PC-9 (cell line): ENCODE measurements at regions of chr7 and their contacts with region 1.

Region 1: GRCh38 chr7:120272261-120272660 is 714 bp upstream of the KCND2 start:
- DNase-seq: peak; percentile 39 to 44
- H3K4me3 ChIP-seq: peak overlapping the region; percentile 61
- H3K27ac ChIP-seq: no peak overlapping the region
- H3K4me1 ChIP-seq: no peaks in the 10 kb centered on the region
- H3K27me3 ChIP-seq: 0 out of 2 replicates have a peak, but pooled peaks cover 4% of the 10 kb centered on the region
- CTCF ChIP-seq: peak; percentile 83

Region 2: DNA sequence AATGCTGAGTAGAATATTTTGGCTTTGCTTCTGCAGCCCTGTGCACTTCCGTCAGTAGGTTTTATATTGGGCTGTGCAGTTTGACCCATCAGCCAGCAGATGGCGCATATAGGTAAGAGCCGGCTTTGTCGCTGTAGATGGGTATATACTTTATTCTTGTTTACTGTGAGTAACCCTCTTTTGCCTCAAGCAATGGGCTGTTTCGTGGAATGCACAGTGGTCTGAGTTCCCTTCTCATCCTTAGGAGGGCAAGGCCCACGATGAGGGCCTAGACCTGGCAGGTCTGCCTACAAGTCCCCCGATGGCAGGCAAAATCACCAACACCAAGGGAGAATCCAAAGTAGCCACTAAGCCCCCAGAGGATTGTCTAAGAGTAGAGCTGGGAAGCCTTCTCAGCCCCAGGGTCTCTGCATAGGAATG is 1002.2 kb before region 1 on chr7:
- CTCF ChIA-PET with region 1: no interaction called
- POLR2A ChIA-PET with region 1: no interaction called
- intact Hi-C with region 1: loop called (anchors 1 kb)
- DNase-seq: peak; percentile 49 to 58
- H3K4me3 ChIP-seq: no peak overlapping the region
- H3K27ac ChIP-seq: no peak overlapping the region
- H3K4me1 ChIP-seq: no peaks in the 10 kb centered on the region
- H3K27me3 ChIP-seq: no peaks in the 10 kb centered on the region
- CTCF ChIP-seq: peak; percentile 91

Region 3: GRCh38 chr7:119935418-119936025 is 336.7 kb before region 1 on chr7:
- CTCF ChIA-PET with region 1: interaction called, 4 read pairs
- POLR2A ChIA-PET with region 1: no interaction called
- intact Hi-C with region 1: loop called (anchors 1 kb)
- DNase-seq: no peak
- H3K4me3 ChIP-seq: no peak overlapping the region
- H3K27ac ChIP-seq: no peak overlapping the region
- H3K4me1 ChIP-seq: no peaks in the 10 kb centered on the region
- H3K27me3 ChIP-seq: no peaks in the 10 kb centered on the region
- CTCF ChIP-seq: peak; percentile 70

Region 4: GRCh38 chr7:120114626-120115025 is 157.6 kb before region 1 on chr7:
- CTCF ChIA-PET with region 1: no interaction called
- POLR2A ChIA-PET with region 1: no interaction called
- intact Hi-C with region 1: no loop called
- DNase-seq: peak; percentile 42 to 45
- H3K4me3 ChIP-seq: no peak overlapping the region
- H3K27ac ChIP-seq: 0 out of 2 replicates have a peak overlapping the region, but pooled peaks have one; percentile 6
- H3K4me1 ChIP-seq: peaks cover 17% of the 10 kb centered on the region
- H3K27me3 ChIP-seq: no peaks in the 10 kb centered on the region
- CTCF ChIP-seq: no peak

Region 5: GRCh38 chr7:120402079-120402767 is 130.0 kb after region 1 on chr7:
- CTCF ChIA-PET with region 1: no interaction called
- POLR2A ChIA-PET with region 1: no interaction called
- intact Hi-C with region 1: loop called (anchors 2 kb)
- DNase-seq: peak in 1 of 2 experiments; percentile 68
- H3K4me3 ChIP-seq: no peak overlapping the region
- H3K27ac ChIP-seq: peak overlapping the region; percentile 85
- H3K4me1 ChIP-seq: peaks cover 24% of the 10 kb centered on the region
- H3K27me3 ChIP-seq: no peaks in the 10 kb centered on the region
- CTCF ChIP-seq: no peak

Region 6: DNA sequence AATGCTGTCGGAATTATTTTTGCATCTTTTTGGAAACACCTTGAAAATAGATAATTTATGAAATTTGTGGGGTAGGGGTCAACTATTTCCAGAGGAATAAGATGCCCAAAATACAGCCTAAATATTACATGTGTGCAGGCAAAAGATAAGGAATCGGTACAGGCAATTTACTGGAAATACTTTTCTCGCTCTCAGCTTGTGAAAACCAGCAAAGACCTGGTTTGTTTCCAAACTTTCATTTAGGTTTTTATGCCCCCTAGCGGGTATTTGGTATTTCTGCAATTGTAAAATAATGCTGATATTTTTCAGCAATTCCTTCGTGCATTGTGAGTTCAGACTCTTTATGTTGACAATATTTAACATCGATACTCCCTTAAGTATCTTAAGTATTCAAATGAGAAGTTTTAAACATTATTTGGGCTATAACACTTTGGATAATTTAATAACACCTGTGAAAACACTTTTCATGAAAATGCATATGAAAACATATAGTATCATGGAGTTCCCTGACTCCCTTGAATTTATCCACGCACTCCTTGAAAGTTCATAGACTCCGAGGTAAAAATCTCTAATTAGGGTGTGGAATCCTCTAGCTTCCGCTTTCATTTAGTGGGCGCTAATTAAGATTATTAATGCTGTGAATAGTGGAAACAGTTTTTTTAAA is 453.2 kb after region 1 on chr7:
- CTCF ChIA-PET with region 1: interaction called, 5 read pairs
- POLR2A ChIA-PET with region 1: no interaction called
- intact Hi-C with region 1: loop called (anchors 10 kb)
- DNase-seq: no peak
- H3K4me3 ChIP-seq: no peak overlapping the region
- H3K27ac ChIP-seq: no peak overlapping the region
- H3K4me1 ChIP-seq: no peaks in the 10 kb centered on the region
- H3K27me3 ChIP-seq: no peaks in the 10 kb centered on the region
- CTCF ChIP-seq: peak; percentile 80